ENCODE measurements at regions of chr4 and their contacts with region 1.

Region 1: DNA sequence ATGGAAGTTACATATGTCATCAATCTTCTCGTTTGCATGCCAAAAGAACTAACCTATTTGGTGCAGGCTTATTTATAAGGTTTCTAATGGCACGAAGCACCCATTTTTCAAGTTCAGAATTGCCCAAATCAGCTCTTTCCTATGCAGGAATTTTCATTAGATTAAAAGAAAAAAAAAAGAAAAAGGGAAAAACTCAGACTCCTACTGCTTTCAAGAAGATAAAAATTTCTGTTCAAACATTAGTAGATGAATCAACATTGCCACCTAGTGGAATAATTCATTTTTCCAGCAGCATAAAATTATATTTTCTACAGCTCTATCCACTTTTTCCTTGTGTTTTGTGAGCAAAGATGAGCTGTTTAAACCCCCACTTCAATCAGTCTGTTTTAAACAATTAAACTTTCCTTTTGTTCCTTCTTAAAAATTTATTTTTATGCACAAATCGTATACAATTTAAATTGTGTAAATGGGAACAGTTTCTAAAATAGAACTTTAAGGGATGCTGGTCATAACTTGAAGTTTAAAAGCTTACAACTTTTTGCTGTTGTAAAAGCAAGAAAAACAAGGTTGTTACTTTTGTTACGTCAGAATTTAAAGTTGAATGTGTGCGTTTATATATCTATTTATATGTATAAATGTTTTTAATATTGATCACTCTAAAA is 309.9 kb downstream of the ARAP2 start:
- DNase-seq: peak in 2 of 9 experiments; percentile 11 to 21
- ATAC-seq: no peak
- H3K4me3 ChIP-seq: no peak overlapping the region
- H3K4me3 Mint-ChIP-seq: no peak overlapping the region
- H3K27ac ChIP-seq: no peak overlapping the region
- H3K27ac Mint-ChIP-seq: no peak overlapping the region
- H3K4me1 ChIP-seq: no peaks in the 10 kb centered on the region
- H3K4me1 Mint-ChIP-seq: no peaks in the 10 kb centered on the region
- H3K27me3 ChIP-seq: no peaks in the 10 kb centered on the region
- H3K27me3 Mint-ChIP-seq: peaks cover 4% of the 10 kb centered on the region
- CTCF ChIP-seq: peak; percentile 59

Region 2: GRCh38 chr4:36187723-36188333 is 253.4 kb after region 1 on chr4:
- CTCF ChIA-PET with region 1: no interaction called
- POLR2A ChIA-PET with region 1: no interaction called
- intact Hi-C with region 1: loop called in 1 of 2 experiments (anchors 10 kb)
- DNase-seq: peak in 2 of 9 experiments; percentile 47 to 59
- ATAC-seq: no peak
- H3K4me3 ChIP-seq: no peak overlapping the region
- H3K4me3 Mint-ChIP-seq: no peak overlapping the region
- H3K27ac ChIP-seq: peak overlapping the region in 1 of 2 experiments; percentile 45
- H3K27ac Mint-ChIP-seq: no peak overlapping the region
- H3K4me1 ChIP-seq: peaks cover 20% of the 10 kb centered on the region
- H3K4me1 Mint-ChIP-seq: peaks cover 44% of the 10 kb centered on the region
- H3K27me3 ChIP-seq: no peaks in the 10 kb centered on the region
- H3K27me3 Mint-ChIP-seq: no peaks in the 10 kb centered on the region
- CTCF ChIP-seq: peak; percentile 72